Transverse colon (tissue), 4 donors: ENCODE measurements at regions of chr11 and their contacts with region 1.

Region 1: DNA sequence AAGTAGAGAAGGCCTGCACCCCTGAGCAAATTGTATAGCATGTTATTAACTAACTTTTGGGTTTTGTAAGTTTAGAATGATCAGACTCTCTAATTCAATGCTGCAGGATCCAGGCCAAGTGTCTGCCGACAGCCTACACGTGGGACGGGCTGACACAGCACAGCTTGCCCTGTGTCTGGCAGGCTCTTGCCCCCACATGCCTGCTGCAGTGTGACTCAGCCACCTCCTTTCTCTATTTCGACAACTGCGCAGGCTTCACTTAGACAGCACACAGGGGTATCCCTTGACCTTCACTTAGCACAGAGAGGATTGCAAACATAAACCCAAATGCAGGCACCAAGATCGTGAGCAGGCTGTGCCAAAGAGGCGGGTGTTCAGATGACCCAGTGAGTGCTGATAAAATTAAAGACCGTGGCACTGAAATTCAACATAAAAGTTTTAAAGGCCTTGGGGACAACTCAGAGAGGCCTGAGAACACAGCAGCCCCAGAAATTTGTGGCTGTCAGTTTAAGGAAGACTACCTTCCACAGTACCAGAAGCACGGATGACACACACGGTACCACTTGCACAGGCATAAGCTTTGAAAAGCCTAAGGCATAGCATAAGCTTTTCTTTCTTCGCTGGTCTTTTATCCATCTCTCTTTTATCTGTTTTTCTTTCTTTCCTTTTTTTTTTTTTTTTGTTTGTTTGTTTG is 37.8 kb downstream of the SCN3B start:
- DNase-seq: peak; percentile 13
- H3K4me3 ChIP-seq: no peak overlapping the region
- H3K27ac ChIP-seq: peak overlapping the region in 2 of 4 donors; percentile 34 to 53
- H3K4me1 ChIP-seq: no peaks in the 10 kb centered on the region
- H3K27me3 ChIP-seq: no peaks in the 10 kb centered on the region
- CTCF ChIP-seq: no peak
- EP300 ChIP-seq: no peak
- POLR2A ChIP-seq: no peak

Region 2: GRCh38 chr11:123654566-123655081 is 38.0 kb after region 1 on chr11 and contains the start of gene SCN3B:
- in situ Hi-C with region 1: no loop called
- intact Hi-C with region 1: loop called (anchors 1 kb)
- DNase-seq: peak; percentile 57
- H3K4me3 ChIP-seq: peak within 1 kb of the TSS; percentile 17 to 54 (median 38)
- H3K27ac ChIP-seq: peak within 1 kb of the TSS in 3 of 4 donors; percentile 1 to 33 (median 26)
- H3K4me1 ChIP-seq: peaks cover 0 to 19% (median 15%) of the 10 kb centered on the region in 4 donors
- H3K27me3 ChIP-seq: peaks cover 49% of the 10 kb centered on the region
- CTCF ChIP-seq: no peak
- EP300 ChIP-seq: no peak
- POLR2A ChIP-seq: no peak
- total RNA-seq, gene SCN3B: 0.20 to 1.1 (median 0.58) TPM

Region 3: GRCh38 chr11:123822032-123822431 is 205.4 kb after region 1 on chr11:
- in situ Hi-C with region 1: no loop called
- intact Hi-C with region 1: no loop called
- DNase-seq: no peak
- H3K4me3 ChIP-seq: no peak overlapping the region
- H3K27ac ChIP-seq: peak overlapping the region in 1 of 4 donors; percentile 53
- H3K4me1 ChIP-seq: peaks cover 0 to 3% (median 0%) of the 10 kb centered on the region in 4 donors
- H3K27me3 ChIP-seq: no peaks in the 10 kb centered on the region
- CTCF ChIP-seq: no peak
- EP300 ChIP-seq: no peak
- POLR2A ChIP-seq: no peak